Ascending aorta (tissue), 2 donors: ENCODE measurements at regions of chr6 and their contacts with region 1.

Region 1: DNA sequence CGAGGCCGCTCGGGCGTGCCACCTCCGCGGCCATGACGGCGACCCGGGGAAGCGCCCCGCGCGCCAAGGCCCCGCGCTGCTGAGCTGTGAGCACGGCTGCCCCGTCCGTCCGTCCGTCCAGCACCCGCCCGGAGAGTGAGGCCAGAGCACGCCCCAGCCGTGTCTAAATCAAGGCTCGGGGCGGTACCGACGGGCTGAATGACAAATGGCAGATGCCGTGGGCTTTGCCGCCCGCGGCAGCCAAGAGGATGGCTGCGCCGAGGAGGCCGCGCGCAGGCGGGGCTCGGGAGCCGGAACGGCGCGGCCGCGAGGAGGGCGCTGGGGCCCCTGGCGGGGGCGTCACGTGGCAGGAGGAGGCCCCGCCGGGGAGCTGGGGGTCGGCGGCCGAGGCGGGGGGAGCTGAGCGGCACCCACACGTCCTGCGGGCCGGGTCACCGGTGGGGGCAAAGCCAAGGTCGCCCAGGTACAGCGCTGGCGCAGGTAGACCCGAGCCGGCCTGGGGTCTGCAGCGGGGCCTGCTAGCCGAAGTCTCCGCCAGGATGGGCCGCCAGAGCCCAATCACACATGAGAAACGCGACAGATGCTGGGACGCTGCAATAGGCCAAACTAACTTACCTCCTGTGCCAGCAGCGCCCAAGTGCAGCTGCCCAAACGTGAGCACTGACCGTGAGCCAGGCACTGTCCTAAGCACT is at the start of gene PLAGL1:
- DNase-seq: peak; percentile 12 to 85
- H3K4me3 ChIP-seq: peak within 1 kb of the TSS; percentile 60 to 79
- H3K27ac ChIP-seq: peak within 1 kb of the TSS; percentile 67 to 88
- H3K4me1 ChIP-seq: peaks cover 0 to 3% of the 10 kb centered on the region in 2 donors
- H3K27me3 ChIP-seq: no peaks in the 10 kb centered on the region
- CTCF ChIP-seq: no peak
- total RNA-seq, gene PLAGL1: 86.3 TPM

Region 2: DNA sequence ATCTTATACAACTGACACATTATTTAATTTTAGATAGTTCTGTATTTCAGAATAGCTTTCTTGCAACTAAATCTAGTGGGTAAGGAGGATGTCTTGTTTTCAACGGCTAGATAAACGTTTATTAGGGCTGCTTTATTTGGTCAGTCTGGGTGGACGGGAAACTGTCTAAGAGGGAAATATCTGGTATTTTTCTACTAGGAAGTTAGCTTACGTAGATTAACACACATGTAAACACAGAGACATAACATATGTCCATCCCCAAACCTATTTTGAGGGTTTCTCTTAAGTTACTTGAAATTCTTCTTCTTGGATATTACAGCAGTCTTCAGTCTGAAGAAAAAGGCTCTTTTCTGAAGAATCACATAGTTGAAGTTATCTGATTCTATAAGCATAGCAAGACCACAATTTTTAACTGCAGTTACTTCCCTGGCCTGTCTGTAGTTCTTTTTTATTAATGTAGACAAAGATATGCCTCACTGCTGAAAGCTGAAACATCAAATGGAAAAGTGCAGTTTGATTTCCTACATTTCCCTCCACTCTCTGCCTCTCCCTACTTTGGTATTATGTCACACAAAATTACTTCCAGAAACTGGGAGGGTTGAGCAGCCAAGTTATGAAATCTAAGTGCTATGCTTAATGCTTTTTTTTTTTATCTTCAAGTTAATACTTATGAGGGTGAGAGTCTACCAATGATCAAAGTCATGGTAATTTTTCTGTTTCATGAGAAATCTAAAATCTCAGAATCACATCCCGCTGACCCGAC is 37.6 kb before region 1 on chr6:
- intact Hi-C with region 1: loop called (anchors 5 kb)
- DNase-seq: no peak
- H3K4me3 ChIP-seq: peak overlapping the region in 1 of 2 donors; percentile 26
- H3K27ac ChIP-seq: peak overlapping the region; percentile 46 to 53
- H3K4me1 ChIP-seq: peaks cover 7 to 16% of the 10 kb centered on the region in 2 donors
- H3K27me3 ChIP-seq: no peaks in the 10 kb centered on the region
- CTCF ChIP-seq: no peak